ENCODE measurements at regions of chr10 and their contacts with region 1.

Region 1: DNA sequence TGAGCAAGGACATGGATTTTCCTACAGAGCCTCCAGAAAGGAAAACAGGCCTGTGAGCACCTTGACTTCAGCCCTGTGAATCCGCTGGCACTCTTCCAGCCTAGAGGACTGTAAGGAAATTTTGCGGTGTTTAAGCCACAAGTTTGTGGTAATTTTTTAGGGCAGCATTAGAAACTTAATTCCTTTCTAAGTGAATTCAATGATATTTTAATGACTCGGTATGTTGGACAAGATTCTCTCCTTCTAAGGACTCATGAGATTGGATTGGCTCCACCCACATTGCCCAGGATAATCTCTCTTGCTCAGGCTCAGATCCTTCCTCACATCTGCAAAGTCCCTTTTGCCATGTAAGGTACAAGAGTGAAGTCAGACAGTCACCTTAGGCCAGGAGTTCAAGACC is 4.5 kb downstream of the LYZL2 start:
- DNase-seq: no peak
- ATAC-seq: no peak
- H3K4me3 ChIP-seq: no peak overlapping the region
- H3K4me3 Mint-ChIP-seq: no peak overlapping the region
- H3K27ac ChIP-seq: no peak overlapping the region
- H3K27ac Mint-ChIP-seq: no peak overlapping the region
- H3K4me1 ChIP-seq: no peaks in the 10 kb centered on the region
- H3K4me1 Mint-ChIP-seq: no peaks in the 10 kb centered on the region
- H3K27me3 ChIP-seq: no peaks in the 10 kb centered on the region
- H3K27me3 Mint-ChIP-seq: peaks cover 3% of the 10 kb centered on the region
- CTCF ChIP-seq: no peak

Region 2: GRCh38 chr10:30583778-30584415 is 41.2 kb before region 1 on chr10:
- CTCF ChIA-PET with region 1: no interaction called
- POLR2A ChIA-PET with region 1: no interaction called
- intact Hi-C with region 1: no loop called
- DNase-seq: peak in 2 of 9 experiments; percentile 17 to 45
- ATAC-seq: no peak
- H3K4me3 ChIP-seq: peak overlapping the region in 1 of 2 experiments; percentile 31
- H3K4me3 Mint-ChIP-seq: peak overlapping the region; percentile 40
- H3K27ac ChIP-seq: no peak overlapping the region
- H3K27ac Mint-ChIP-seq: no peak overlapping the region
- H3K4me1 ChIP-seq: no peaks in the 10 kb centered on the region
- H3K4me1 Mint-ChIP-seq: peaks cover 6% of the 10 kb centered on the region
- H3K27me3 ChIP-seq: no peaks in the 10 kb centered on the region
- H3K27me3 Mint-ChIP-seq: peaks cover 2% of the 10 kb centered on the region
- CTCF ChIP-seq: no peak

Region 3: DNA sequence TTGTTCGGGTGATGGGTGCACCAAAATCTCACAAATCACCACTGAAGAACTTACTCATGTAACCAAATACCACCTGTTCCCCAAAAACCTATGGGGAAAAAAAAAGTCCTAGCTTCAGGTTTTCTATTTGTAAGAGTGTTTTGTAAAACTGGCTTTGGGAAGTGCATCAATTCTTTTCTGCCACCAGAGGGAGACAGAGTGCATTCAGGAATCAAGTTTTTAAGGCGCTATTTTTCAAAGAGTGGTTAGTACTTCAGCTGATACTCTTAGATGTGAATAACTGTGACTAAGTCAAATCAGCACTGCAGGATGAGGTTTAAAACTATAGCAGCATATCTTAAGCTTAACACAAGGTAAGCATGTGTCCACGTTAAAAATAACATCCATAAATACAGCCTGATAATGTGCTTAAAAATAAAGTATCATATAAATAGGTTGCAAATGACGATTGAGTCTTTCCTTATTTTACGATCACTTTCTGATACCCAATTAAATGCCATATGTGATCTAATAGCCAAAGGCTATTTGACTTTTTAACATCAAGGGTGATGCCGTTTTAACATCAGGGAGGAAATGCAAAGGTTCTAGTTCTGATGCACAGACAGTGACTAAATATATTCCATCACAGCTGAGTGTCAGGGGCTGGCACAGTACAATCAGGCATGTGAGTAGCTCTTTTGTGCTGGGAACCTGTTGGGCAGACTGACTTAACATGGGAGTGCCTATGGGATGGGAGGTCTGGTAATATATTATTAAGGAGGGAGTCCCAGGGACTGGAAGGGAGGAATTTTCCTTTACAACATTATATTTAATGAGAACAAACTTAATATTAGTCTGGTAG is 15.1 kb after region 1 on chr10:
- CTCF ChIA-PET with region 1: interaction called, 30 read pairs
- POLR2A ChIA-PET with region 1: no interaction called
- intact Hi-C with region 1: no loop called
- DNase-seq: peak in 4 of 9 experiments; percentile 10 to 72 (median 41)
- ATAC-seq: peak; percentile 40
- H3K4me3 ChIP-seq: no peak overlapping the region
- H3K4me3 Mint-ChIP-seq: no peak overlapping the region
- H3K27ac ChIP-seq: no peak overlapping the region
- H3K27ac Mint-ChIP-seq: no peak overlapping the region
- H3K4me1 ChIP-seq: no peaks in the 10 kb centered on the region
- H3K4me1 Mint-ChIP-seq: no peaks in the 10 kb centered on the region
- H3K27me3 ChIP-seq: no peaks in the 10 kb centered on the region
- H3K27me3 Mint-ChIP-seq: peaks cover 40% of the 10 kb centered on the region
- CTCF ChIP-seq: peak; percentile 92